ENCODE measurements at regions of chr6 and their contacts with region 1.

Region 1: GRCh38 chr6:116680975-116681808 is at the start of gene KPNA5:
- DNase-seq: peak; percentile 84 to 87
- H3K4me3 ChIP-seq: peak within 1 kb of the TSS; percentile 84
- H3K27ac ChIP-seq: peak within 1 kb of the TSS; percentile 85
- H3K4me1 ChIP-seq: peaks cover 15% of the 10 kb centered on the region
- H3K27me3 ChIP-seq: no peaks in the 10 kb centered on the region
- CTCF ChIP-seq: no peak
- total RNA-seq, gene KPNA5: 6.6 and 6.8 TPM in 2 replicates

Region 2: GRCh38 chr6:116615937-116616736 is 65.1 kb before region 1 on chr6 and contains the start of gene RSPH4A:
- CTCF ChIA-PET with region 1: no interaction called
- POLR2A ChIA-PET with region 1: no interaction called
- intact Hi-C with region 1: loop called (anchors 2 kb)
- DNase-seq: peak; percentile 86 to 91
- H3K4me3 ChIP-seq: peak within 1 kb of the TSS; percentile 87
- H3K27ac ChIP-seq: no peak within 1 kb of the TSS
- H3K4me1 ChIP-seq: peaks cover 9% of the 10 kb centered on the region
- H3K27me3 ChIP-seq: no peaks in the 10 kb centered on the region
- CTCF ChIP-seq: no peak
- total RNA-seq, gene RSPH4A: 0.13 and 0.24 TPM in 2 replicates